Activated CD4-positive, alpha-beta T cell treated with anti-CD3 and anti-CD28 coated beads, Interleukin-2, amount 10 ng/mL, durations not matched to agents 24 days and 14 days (primary cell): ENCODE measurements at regions of chr13 and their contacts with region 1.

Region 1: GRCh38 chr13:43044720-43045301 is 21.4 kb downstream of the DNAJC15 start:
- DNase-seq: peak; percentile 8
- H3K4me3 Mint-ChIP-seq: peak overlapping the region; percentile 20
- H3K27ac Mint-ChIP-seq: peak overlapping the region; percentile 52
- H3K4me1 Mint-ChIP-seq: peaks cover 54% of the 10 kb centered on the region
- H3K27me3 Mint-ChIP-seq: no peaks in the 10 kb centered on the region

Region 2: DNA sequence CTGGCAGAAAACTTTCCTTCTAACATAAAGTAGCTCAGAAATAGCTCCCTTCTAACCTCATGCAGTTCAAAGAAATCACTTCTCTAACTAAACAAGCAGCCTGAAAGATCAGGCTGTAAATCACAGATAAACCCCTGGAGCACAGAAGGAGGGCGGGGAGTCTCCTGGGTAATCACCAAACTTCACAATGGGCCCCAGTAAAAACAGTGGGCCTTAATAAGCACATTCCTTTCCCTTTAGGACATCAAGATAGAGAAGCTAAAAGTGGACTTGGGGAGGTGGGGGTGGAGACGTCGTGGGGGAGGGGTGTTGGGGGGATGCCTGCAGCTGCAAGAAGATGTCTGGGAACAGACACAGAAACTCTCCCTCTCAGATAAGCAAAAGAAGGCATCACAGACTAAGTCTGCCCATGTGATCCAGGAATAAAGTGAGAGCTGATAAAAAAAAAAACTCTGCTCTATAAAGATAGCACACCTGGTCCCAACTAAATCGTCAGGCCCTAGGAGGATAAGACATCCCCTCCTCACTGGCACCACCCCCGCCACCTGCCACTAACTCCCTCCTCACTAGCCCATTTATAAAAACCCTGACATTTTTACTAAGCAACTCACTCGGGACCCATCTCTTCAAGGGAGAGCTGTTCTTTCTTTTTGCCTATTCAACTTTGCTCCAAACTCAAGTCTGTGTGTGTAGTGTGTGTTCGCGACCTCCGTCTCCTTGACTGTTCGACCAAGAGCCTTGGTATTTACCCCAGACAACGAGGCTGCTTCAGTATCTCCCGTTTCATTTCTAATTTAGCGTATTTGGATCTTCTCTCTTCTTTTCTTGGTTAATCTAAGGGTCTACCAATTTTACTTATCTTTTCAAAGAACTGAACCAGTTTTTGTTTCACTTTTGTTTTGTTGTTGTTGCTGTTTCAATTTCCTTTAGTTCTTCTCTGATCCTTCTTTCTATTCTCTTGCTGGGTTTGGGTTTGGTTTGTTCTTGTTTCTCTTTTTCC is 10.3 kb after region 1 on chr13:
- intact Hi-C with region 1: loop called (anchors 1 kb)
- DNase-seq: peak; percentile 74
- H3K4me3 Mint-ChIP-seq: no peak overlapping the region
- H3K27ac Mint-ChIP-seq: no peak overlapping the region
- H3K4me1 Mint-ChIP-seq: peaks cover 28% of the 10 kb centered on the region
- H3K27me3 Mint-ChIP-seq: no peaks in the 10 kb centered on the region

Region 3: GRCh38 chr13:43061496-43062265 is 16.9 kb after region 1 on chr13:
- intact Hi-C with region 1: loop called (anchors 1 kb)
- DNase-seq: no peak
- H3K4me3 Mint-ChIP-seq: peak overlapping the region; percentile 30
- H3K27ac Mint-ChIP-seq: peak overlapping the region; percentile 77
- H3K4me1 Mint-ChIP-seq: peaks cover 42% of the 10 kb centered on the region
- H3K27me3 Mint-ChIP-seq: no peaks in the 10 kb centered on the region